WTC11 (cell line): ENCODE measurements at regions of chr3 and their contacts with region 1.

Region 1: GRCh38 chr3:107660306-107660976 is 137.7 kb downstream of the BBX start:
- DNase-seq: no peak
- ATAC-seq: no peak
- H3K4me3 Mint-ChIP-seq: no peak overlapping the region
- H3K27ac Mint-ChIP-seq: no peak overlapping the region
- H3K4me1 Mint-ChIP-seq: peaks cover 40% of the 10 kb centered on the region
- H3K27me3 Mint-ChIP-seq: no peaks in the 10 kb centered on the region
- CTCF ChIP-seq: peak; percentile 21; the same call in 1 of the 2 replicates

Region 2: GRCh38 chr3:107356706-107357105 is 303.7 kb before region 1 on chr3:
- CTCF ChIA-PET with region 1: no interaction called
- POLR2A ChIA-PET with region 1: no interaction called
- DNase-seq: no peak
- ATAC-seq: no peak
- H3K4me3 Mint-ChIP-seq: no peak overlapping the region
- H3K27ac Mint-ChIP-seq: no peak overlapping the region
- H3K4me1 Mint-ChIP-seq: 0 out of 2 replicates have a peak, but pooled peaks cover 3% of the 10 kb centered on the region
- H3K27me3 Mint-ChIP-seq: no peaks in the 10 kb centered on the region; the same call in 1 of the 2 replicates
- CTCF ChIP-seq: no peak

Region 3: GRCh38 chr3:107496855-107497254 is 163.6 kb before region 1 on chr3:
- CTCF ChIA-PET with region 1: no interaction called
- POLR2A ChIA-PET with region 1: no interaction called
- DNase-seq: no peak
- ATAC-seq: no peak
- H3K4me3 Mint-ChIP-seq: no peak overlapping the region
- H3K27ac Mint-ChIP-seq: no peak overlapping the region
- H3K4me1 Mint-ChIP-seq: no peaks in the 10 kb centered on the region
- H3K27me3 Mint-ChIP-seq: no peaks in the 10 kb centered on the region; the same call in 1 of the 2 replicates
- CTCF ChIP-seq: no peak

Region 4: DNA sequence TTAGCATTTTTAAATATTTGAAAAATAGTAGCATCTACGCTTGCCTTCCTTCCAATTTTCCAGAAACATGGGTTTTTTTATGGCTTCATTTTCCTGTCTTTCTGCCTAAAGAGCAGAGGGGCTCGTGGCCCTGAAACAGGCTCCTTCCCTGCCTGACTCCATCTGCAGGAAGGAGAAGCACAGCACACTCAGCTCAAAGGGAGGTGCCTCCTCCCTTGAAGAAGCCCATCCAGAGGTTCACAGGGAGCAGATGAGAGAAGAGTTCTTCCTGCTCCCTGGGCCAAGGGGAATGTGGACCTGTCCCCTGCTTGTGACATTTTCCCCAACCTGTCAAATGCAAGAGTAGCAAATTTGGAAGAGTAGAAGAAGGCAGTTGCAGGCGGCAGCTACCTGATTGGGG is 81.9 kb before region 1 on chr3:
- CTCF ChIA-PET with region 1: interaction called, 20 read pairs
- POLR2A ChIA-PET with region 1: no interaction called
- DNase-seq: no peak
- ATAC-seq: peak; percentile 92
- H3K4me3 Mint-ChIP-seq: no peak overlapping the region
- H3K27ac Mint-ChIP-seq: peak overlapping the region; percentile 80
- H3K4me1 Mint-ChIP-seq: peaks cover 39% of the 10 kb centered on the region
- H3K27me3 Mint-ChIP-seq: no peaks in the 10 kb centered on the region
- CTCF ChIP-seq: no peak

Region 5: DNA sequence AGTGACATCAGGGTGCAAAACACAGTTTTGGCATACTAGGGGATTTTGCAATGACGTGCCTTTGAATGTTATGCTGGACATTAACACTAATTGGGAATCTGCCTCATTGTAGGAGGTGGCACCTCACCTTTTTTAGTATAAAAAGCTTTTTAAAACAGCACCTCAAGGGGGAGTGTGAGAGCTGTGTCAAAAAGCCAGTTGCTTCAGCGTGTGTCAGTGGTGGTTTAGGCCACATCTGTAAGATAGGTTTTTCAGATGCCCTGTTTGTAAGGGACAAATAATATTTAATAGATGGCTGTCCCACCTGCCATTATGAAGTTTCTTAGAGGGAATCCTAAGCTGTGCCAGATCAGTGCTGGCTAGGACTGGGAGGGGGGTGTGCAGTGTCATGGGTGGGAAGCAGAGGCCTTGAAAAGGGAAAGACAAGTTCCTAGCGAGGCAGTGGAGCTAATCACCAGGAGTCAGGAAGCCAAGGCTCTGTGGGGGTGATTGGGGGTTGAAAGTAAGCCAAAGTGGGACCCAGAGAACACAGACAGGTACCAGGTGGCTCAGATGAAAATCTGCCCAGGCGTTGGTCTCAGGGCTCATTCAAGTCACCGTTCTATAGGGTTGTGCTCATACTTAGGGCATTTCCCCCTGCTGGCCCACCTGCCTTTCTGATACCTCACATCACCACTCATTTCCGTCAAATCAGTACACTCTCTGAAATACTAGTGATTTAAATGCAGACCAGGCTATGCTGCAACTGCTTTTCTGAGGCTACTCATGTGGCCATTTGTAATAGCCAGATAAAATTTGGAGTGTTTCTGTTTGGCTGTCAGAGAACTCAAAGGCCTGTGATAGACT is 17.2 kb before region 1 on chr3:
- CTCF ChIA-PET with region 1: interaction called, 17 read pairs
- POLR2A ChIA-PET with region 1: no interaction called
- DNase-seq: no peak
- ATAC-seq: peak; percentile 92
- H3K4me3 Mint-ChIP-seq: no peak overlapping the region
- H3K27ac Mint-ChIP-seq: no peak overlapping the region
- H3K4me1 Mint-ChIP-seq: peaks cover 30% of the 10 kb centered on the region
- H3K27me3 Mint-ChIP-seq: no peaks in the 10 kb centered on the region
- CTCF ChIP-seq: no peak

Region 6: DNA sequence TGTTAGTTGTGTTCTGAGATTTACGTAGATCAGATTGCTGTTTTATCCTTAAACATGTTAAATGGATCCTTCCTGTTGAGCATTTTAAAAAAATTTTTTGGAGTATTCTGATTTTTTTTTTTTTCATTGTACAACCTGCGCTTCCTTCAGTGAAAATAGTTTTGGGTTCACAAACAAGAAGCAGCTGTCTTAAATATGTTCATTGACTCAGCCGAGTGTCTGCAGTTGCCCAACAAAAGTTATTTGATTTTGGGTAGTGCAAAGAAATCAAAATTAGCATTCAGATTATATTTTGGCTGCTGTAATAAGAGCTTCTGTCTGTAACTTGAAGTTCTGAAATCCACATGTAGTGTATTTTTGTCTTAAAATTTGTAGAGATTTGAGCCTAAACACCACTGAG is 10.5 kb after region 1 on chr3:
- CTCF ChIA-PET with region 1: interaction called, 39 read pairs
- POLR2A ChIA-PET with region 1: interaction called, 3 read pairs
- DNase-seq: no peak
- ATAC-seq: no peak
- H3K4me3 Mint-ChIP-seq: no peak overlapping the region
- H3K27ac Mint-ChIP-seq: 0 out of 2 replicates have a peak overlapping the region, but pooled peaks have one; percentile 14
- H3K4me1 Mint-ChIP-seq: peaks cover 20% of the 10 kb centered on the region
- H3K27me3 Mint-ChIP-seq: no peaks in the 10 kb centered on the region
- CTCF ChIP-seq: no peak

Region 7: GRCh38 chr3:107676469-107677309 is 16.2 kb after region 1 on chr3:
- CTCF ChIA-PET with region 1: interaction called, 39 read pairs
- POLR2A ChIA-PET with region 1: no interaction called
- DNase-seq: no peak
- ATAC-seq: peak; percentile 41; the same call in 1 of the 2 replicates
- H3K4me3 Mint-ChIP-seq: no peak overlapping the region
- H3K27ac Mint-ChIP-seq: no peak overlapping the region
- H3K4me1 Mint-ChIP-seq: peaks cover 13% of the 10 kb centered on the region
- H3K27me3 Mint-ChIP-seq: no peaks in the 10 kb centered on the region
- CTCF ChIP-seq: peak; percentile 15; the same call in 1 of the 2 replicates

Region 8: DNA sequence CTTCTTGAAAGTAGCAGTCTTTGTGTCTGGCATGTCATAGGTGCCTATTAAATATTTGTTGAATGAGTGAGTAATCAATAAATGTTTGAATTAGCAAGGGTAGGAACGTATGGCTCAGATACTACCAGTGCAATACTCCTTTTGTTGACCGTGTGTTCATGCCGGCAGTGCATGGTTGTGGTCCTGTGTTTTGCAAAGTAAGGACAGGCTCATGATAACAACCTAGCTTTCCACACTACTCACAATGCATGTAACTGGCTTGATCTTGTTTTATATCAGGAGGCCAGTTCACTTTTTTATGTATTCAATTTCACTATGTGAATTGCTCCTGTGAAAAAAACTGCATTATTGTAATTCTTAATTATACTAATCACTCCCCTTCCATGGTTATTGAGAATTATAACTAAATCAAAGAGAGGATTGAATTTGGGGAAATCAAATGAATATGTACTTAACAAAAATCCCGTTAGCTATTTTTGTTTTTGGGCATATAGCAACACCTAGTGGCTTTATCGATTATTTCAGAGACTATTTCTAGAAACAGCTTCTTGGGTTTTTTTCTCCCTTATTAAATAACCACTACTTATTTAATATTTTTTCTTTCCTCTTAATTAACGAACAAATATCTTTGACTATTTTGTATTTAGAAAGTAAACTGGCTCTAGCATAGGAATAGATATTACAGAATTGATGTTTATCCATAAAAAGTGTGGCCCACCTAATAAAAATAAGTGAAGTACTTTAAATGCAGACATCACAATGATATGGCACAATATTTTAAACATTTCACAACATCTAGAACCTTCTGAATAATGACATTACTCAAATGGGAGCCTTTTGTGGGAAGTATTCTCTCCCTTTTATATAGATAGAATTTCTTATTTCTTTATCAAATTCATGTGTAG is 80.8 kb after region 1 on chr3:
- CTCF ChIA-PET with region 1: interaction called, 50 read pairs
- POLR2A ChIA-PET with region 1: interaction called, 4 read pairs
- DNase-seq: no peak
- ATAC-seq: no peak
- H3K4me3 Mint-ChIP-seq: no peak overlapping the region
- H3K27ac Mint-ChIP-seq: no peak overlapping the region
- H3K4me1 Mint-ChIP-seq: peaks cover 12% of the 10 kb centered on the region
- H3K27me3 Mint-ChIP-seq: no peaks in the 10 kb centered on the region
- CTCF ChIP-seq: peak; percentile 30; the same call in 1 of the 2 replicates

Region 9: GRCh38 chr3:107753480-107753879 is 93.0 kb after region 1 on chr3:
- CTCF ChIA-PET with region 1: interaction called, 11 read pairs
- POLR2A ChIA-PET with region 1: interaction called, 5 read pairs
- DNase-seq: peak; percentile 44
- ATAC-seq: peak; percentile 92
- H3K4me3 Mint-ChIP-seq: no peak overlapping the region
- H3K27ac Mint-ChIP-seq: no peak overlapping the region
- H3K4me1 Mint-ChIP-seq: peaks cover 5% of the 10 kb centered on the region
- H3K27me3 Mint-ChIP-seq: no peaks in the 10 kb centered on the region
- CTCF ChIP-seq: no peak